RWPE1 (cell line): ENCODE measurements at regions of chr5 and their contacts with region 1.

Region 1: GRCh38 chr5:39992617-39993203 is 567.9 kb upstream of the DAB2 start:
- DNase-seq: no peak
- H3K27ac ChIP-seq: no peak overlapping the region
- CTCF ChIP-seq: no peak

Region 2: DNA sequence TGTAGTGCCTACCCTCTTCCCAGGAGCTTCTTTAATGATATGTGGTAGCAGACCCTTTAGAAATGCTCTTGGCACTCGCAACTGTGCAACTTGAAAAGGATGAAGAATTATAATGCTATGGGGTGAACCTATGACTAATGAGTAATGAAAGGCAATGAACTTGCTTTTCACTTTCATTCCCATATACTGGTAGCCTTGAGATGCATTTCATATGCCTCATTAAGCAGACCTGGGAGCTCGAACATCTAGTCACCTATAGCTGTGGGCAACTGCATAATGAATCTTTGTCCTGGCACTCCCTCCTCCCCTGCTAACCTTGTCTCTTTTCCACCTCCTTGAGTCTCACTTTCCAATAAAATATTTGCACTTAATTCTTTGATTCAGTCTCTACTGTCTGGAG is 38.0 kb after region 1 on chr5:
- CTCF ChIA-PET with region 1: no interaction called
- POLR2A ChIA-PET with region 1: no interaction called
- DNase-seq: no peak
- H3K27ac ChIP-seq: no peak overlapping the region
- CTCF ChIP-seq: no peak

Region 3: DNA sequence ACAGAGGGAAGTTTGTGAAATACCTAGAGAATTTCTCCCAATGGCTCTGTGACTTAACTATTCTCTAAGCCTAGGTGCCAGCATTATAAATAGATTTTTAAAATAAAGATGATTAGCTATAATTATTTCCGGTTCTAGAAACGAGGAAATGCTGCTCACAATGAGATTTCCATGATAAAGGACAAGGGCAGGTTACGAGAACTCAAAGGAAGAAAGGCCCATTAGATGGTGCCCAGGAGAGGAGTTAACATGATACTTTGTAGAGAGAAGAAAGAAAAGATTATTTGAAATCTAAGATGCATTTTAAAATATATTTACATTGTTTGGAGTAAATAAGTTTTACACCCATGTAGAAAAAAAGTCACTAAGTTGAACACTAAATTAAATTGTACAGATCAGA is 148.7 kb after region 1 on chr5:
- CTCF ChIA-PET with region 1: interaction called, 11 read pairs
- POLR2A ChIA-PET with region 1: no interaction called
- DNase-seq: no peak
- H3K27ac ChIP-seq: no peak overlapping the region
- CTCF ChIP-seq: no peak